Vagina (tissue), 2 donors: ENCODE measurements at regions of chr12 and their contacts with region 1.

Region 1: GRCh38 chr12:112243255-112244110 is 118.1 kb downstream of the TRAFD1 start:
- DNase-seq: no peak
- H3K4me3 ChIP-seq: no peak overlapping the region
- H3K27ac ChIP-seq: no peak overlapping the region
- H3K4me1 ChIP-seq: no peaks in the 10 kb centered on the region
- H3K27me3 ChIP-seq: no peaks in the 10 kb centered on the region
- CTCF ChIP-seq: no peak
- POLR2A ChIP-seq: no peak

Region 2: DNA sequence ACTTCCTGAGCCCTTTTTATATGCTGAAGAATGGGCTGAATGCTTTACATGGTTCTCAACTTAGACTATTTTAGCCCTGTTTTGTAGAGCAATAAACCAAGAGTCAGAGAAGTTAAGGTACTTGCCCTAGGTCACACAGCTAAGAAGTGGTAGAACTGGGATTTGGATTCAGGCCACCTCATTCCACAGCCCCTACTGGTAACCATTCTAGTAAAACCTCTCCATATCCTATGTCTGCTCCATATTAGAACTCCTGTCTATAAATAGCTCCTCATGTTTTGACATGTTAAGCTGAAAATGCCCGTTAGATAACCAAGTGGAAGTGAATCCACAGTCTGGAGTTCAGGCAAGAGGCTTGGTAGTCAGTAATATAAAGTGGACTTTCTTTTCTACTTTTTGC is 27.2 kb after region 1 on chr12:
- intact Hi-C with region 1: loop called (anchors 1 kb)
- DNase-seq: no peak
- H3K4me3 ChIP-seq: no peak overlapping the region
- H3K27ac ChIP-seq: no peak overlapping the region
- H3K4me1 ChIP-seq: no peaks in the 10 kb centered on the region
- H3K27me3 ChIP-seq: no peaks in the 10 kb centered on the region
- CTCF ChIP-seq: no peak
- POLR2A ChIP-seq: no peak